ENCODE measurements at regions of chr5 and their contacts with region 1.

Region 1: DNA sequence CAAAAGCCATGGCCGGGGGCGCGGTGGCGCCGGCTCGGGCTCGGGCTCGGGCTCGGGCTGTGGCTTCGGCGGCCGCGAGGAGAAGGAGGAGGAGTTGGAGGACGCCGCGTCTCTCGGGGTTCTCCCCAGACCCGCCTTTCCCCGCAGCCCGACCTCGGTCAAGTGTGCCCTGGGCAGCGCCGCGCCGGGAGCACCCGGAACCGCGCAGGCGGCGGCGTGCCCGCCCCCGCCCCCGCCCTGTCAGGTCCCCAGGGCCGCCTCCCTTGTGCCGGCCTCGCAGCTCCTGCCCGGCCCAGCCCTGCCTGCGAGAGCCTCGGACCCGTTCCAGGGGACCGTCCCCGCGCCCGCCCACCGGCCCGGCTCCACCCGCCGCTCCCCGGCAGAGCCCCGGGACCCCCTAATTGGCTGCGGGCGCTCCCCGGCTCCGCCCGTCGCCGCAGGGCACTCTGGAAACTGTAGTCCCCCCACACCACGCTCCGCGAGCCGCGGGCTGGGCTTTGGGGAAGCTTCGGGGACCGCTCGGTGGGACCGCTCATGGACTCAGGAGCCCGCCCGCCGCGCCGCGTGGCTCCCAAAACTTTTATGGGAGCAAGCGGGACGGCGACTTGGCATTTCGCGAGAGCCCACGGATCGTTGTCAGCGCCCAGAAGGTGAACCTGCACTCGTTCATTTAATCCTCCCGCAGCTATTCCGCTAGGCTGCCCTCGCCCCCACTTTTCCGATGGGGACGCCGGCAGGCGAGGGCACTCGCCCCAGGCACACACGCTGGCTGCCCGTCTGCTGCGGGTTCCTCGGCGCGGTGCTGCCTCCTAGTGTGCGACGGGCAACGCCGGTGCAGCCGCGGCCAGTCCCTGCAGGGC is at the start of gene STK10:
- DNase-seq: peak; percentile 94
- ATAC-seq: peak; percentile 72
- H3K4me3 Mint-ChIP-seq: peak within 1 kb of the TSS; percentile 95
- H3K27ac Mint-ChIP-seq: peak within 1 kb of the TSS; percentile 98
- H3K4me1 Mint-ChIP-seq: peaks cover 28% of the 10 kb centered on the region
- H3K27me3 Mint-ChIP-seq: no peaks in the 10 kb centered on the region
- total RNA-seq, gene STK10: 83.1 to 144 TPM

Region 2: GRCh38 chr5:171907725-171908343 is 280.4 kb before region 1 on chr5:
- CTCF ChIA-PET with region 1: no interaction called
- POLR2A ChIA-PET with region 1: no interaction called
- intact Hi-C with region 1: loop called (anchors 1 to 5 kb)
- DNase-seq: peak; percentile 68
- ATAC-seq: peak; percentile 81
- H3K4me3 Mint-ChIP-seq: no peak overlapping the region
- H3K27ac Mint-ChIP-seq: peak overlapping the region; percentile 64
- H3K4me1 Mint-ChIP-seq: peaks cover 57% of the 10 kb centered on the region
- H3K27me3 Mint-ChIP-seq: no peaks in the 10 kb centered on the region

Region 3: DNA sequence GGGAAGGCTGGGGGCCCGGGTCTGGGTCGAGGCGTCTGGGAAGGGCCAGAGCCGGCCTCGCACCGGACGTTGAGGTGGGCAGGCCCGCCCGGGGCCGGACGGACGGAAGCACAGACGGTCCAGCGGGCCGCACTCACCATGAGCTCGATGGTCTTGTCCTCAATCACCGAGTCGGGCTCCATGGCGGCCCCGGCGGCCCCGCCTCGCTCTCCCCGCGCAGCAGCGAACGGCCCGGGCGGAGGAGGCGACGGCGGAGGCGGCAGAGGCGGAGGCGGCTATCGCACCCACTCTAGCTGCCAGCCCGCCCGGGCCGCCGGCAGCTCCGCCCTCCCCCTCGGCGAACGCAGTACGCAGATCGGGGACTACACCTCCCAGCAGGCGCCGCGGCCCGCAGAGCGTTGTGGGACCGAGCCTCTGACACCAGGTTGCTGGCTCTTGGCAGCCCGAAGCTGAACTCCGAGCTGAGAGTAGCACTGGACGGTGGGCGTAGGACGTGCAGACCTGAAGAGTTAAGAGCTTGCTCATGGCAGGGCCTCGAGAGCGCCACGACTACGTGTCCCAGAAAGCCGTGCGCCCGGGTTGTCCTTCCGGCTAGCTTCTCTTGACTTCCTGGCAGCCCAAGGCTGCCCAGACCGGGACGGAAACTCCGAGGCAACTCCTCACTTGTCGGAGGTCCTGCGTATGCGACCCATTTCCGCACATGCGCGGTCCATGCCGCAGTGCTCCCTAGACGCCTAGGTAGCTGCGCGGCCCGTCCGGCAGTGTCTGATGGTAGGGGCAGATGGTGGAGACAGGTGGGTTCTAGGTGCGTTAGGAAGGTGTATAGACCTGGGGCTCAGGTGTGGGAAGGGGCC is 181.7 kb before region 1 on chr5 and contains the start of gene FBXW11:
- CTCF ChIA-PET with region 1: interaction called, 15 read pairs
- POLR2A ChIA-PET with region 1: interaction called, 6 read pairs
- intact Hi-C with region 1: loop called (anchors 1 to 2 kb)
- DNase-seq: peak; percentile 97
- ATAC-seq: peak; percentile 85
- H3K4me3 Mint-ChIP-seq: peak within 1 kb of the TSS; percentile 92
- H3K27ac Mint-ChIP-seq: peak within 1 kb of the TSS; percentile 98
- H3K4me1 Mint-ChIP-seq: peaks cover 43% of the 10 kb centered on the region
- H3K27me3 Mint-ChIP-seq: no peaks in the 10 kb centered on the region
- total RNA-seq, gene FBXW11: 33.8 to 39.5 TPM

Region 4: DNA sequence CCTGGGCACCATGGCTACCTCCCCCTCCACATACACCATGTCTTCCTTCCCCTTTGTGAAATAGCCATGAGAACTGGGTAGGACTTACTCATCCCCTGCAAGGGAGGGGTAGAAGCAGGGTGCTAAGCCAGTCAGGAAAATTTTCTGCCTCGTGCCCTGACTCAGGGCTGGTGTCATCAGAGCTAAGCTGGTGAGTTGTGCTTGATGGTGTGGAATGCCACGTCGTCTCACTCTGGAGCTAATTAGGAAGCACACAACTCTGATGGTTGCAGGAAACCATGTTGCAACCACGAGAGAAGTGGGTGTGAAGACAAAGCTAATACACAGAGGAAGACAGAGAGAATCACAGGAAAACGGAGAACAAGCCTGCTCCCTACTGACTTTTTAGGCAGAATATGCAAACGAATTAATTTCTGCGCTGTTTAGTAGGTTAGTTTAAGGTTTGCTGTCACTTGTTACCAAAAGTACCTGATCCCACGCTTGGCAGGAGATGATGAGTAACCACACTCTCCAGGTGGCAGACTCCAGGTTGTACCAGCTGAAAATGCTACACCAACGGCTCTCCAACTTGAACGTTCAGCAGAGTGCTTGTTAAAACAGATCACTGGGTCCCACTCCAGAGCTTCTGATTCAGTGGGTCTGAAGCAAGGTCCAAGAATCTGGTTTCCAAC is 54.8 kb before region 1 on chr5:
- CTCF ChIA-PET with region 1: interaction called, 9 read pairs
- POLR2A ChIA-PET with region 1: interaction called, 5 read pairs
- intact Hi-C with region 1: loop called in 1 of 2 experiments (anchors 1 kb)
- DNase-seq: peak; percentile 83
- ATAC-seq: peak; percentile 99
- H3K4me3 Mint-ChIP-seq: peak overlapping the region; percentile 11
- H3K27ac Mint-ChIP-seq: peak overlapping the region; percentile 99
- H3K4me1 Mint-ChIP-seq: peaks cover 59% of the 10 kb centered on the region
- H3K27me3 Mint-ChIP-seq: no peaks in the 10 kb centered on the region

Region 5: DNA sequence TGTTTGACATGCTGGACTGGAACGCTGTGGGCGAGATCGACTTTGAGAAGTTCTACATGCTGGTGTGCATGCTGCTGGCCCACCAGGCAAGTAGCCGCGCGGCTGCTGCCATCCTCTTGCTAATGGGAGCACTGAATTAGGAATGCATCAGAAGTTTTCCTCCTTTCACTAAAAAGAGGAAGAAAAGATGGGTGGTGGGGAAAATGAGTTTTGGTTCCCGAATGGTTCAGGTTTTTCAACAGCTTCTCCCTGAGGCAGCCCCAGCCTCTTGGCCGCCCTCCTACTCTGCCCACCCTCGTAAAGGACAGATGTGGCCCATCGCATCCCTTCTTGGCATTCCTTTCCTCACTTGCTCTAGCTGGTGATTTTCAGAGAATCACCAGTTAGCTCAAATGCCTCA is 11.2 kb after region 1 on chr5:
- CTCF ChIA-PET with region 1: interaction called, 21 read pairs
- POLR2A ChIA-PET with region 1: no interaction called
- intact Hi-C with region 1: no loop called
- DNase-seq: no peak
- ATAC-seq: no peak
- H3K4me3 Mint-ChIP-seq: no peak overlapping the region
- H3K27ac Mint-ChIP-seq: no peak overlapping the region
- H3K4me1 Mint-ChIP-seq: no peaks in the 10 kb centered on the region
- H3K27me3 Mint-ChIP-seq: peaks cover 3% of the 10 kb centered on the region

Region 6: DNA sequence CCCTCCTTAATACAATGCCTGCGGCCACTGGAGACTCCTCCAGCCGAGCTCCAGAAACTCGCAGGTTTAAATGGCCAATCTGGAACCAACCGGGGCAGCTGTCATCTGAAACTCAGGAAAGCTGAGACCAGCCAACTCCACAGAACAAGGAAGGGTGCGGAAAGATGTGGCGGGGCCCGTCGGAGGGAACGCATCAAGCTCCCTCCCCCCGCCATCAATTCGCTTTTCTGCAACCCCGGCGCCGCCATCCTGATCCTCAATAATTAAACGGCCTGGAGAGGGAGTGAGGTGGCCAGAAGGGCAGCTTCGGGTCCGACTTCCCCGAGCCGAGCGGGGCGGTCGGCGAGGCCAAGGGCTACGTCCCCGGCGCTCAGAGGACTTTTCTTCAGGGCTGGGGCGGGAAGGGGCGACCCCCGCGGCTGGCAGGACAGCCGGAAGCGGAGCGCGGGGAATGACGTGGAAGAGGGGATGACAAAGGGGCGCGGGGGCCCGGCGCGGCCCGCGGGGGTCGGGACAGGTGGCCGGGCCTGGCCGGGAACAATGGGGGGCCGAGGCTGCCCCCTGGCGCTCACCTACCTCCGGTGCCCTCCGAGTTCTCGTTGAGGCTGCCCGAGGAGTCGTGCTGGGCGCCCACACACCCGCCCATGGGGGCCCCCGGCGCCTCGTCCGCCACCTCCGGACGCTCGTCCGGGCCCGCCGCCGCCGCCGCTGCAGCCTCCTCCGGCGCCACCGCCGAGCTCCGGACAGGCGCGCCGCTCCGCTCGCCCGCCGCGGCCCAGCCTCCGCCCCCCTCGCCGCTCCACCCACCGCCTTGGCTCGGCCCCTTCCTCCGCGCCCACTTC is 95.0 kb after region 1 on chr5 and contains the start of gene UBTD2:
- CTCF ChIA-PET with region 1: interaction called, 11 read pairs
- POLR2A ChIA-PET with region 1: interaction called, 4 read pairs
- intact Hi-C with region 1: loop called (anchors 1 to 2 kb)
- DNase-seq: peak; percentile 84
- ATAC-seq: peak; percentile 85
- H3K4me3 Mint-ChIP-seq: peak within 1 kb of the TSS; percentile 85
- H3K27ac Mint-ChIP-seq: peak within 1 kb of the TSS; percentile 87
- H3K4me1 Mint-ChIP-seq: peaks cover 16% of the 10 kb centered on the region
- H3K27me3 Mint-ChIP-seq: no peaks in the 10 kb centered on the region
- total RNA-seq, gene UBTD2: 6.0 to 6.1 TPM

Region 7: DNA sequence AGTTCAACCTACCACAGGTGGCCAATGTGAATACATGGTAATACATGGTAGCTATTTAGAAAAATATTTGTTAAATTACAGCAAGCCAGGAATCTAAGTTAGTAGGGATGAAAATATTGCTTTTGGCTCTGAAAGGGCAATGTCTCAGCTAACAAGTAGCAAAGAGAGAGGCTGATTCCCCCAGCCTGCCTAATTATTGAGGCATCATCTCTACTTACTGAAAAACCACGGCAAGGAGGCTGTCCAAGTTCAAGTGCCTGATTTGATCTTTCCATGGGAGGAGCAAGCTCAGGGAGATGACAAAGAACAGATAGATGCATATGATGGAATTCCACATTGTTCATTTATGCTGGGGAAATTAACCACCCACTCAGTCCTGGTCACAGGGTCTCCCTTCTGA is 124.0 kb after region 1 on chr5:
- CTCF ChIA-PET with region 1: no interaction called
- POLR2A ChIA-PET with region 1: no interaction called
- intact Hi-C with region 1: no loop called
- DNase-seq: no peak
- ATAC-seq: no peak
- H3K4me3 Mint-ChIP-seq: no peak overlapping the region
- H3K27ac Mint-ChIP-seq: no peak overlapping the region
- H3K4me1 Mint-ChIP-seq: no peaks in the 10 kb centered on the region
- H3K27me3 Mint-ChIP-seq: no peaks in the 10 kb centered on the region

Measured in activated CD4-positive, alpha-beta T cell treated with anti-CD3 and anti-CD28 coated beads for 36 hours (primary cell).